CD14-positive monocyte (primary cell): ENCODE measurements at regions of chr1 and their contacts with region 1.

Region 1: DNA sequence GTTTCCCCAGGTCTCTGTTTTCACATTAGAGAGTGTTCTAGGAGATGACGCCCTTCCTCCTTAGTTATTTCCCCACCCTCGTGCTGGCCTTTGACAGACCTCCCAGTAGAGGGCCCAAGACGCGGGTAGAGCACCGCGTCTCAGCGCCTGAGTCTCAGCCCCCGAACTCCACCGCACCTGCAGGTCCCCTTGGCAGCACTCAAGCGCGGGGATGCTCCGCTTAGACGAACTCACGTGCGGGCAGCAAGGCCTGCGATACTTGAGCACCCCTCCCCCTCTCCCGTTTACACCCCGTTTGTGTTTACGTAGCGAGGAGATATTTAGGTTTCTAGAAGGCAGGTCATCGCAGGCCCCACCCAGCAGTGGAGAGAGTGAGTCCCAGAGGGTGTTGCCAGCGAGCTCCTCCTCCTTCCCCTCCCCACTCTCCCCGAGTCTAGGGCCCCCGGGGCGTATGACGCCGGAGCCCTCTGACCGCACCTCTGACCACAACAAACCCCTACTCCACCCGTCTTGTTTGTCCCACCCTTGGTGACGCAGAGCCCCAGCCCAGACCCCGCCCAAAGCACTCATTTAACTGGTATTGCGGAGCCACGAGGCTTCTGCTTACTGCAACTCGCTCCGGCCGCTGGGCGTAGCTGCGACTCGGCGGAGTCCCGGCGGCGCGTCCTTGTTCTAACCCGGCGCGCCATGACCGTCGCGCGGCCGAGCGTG is at the start of gene CD55:
- DNase-seq: peak; percentile 99 to 100 (median 100)
- H3K4me3 ChIP-seq: peak within 1 kb of the TSS; percentile 78 to 95 (median 95)
- H3K4me3 Mint-ChIP-seq: peak within 1 kb of the TSS; percentile 96 to 97
- H3K27ac ChIP-seq: peak within 1 kb of the TSS; percentile 99
- H3K27ac Mint-ChIP-seq: peak within 1 kb of the TSS; percentile 100
- H3K4me1 ChIP-seq: peaks cover 57 to 73% of the 10 kb centered on the region in 2 donors
- H3K4me1 Mint-ChIP-seq: peaks cover 63% of the 10 kb centered on the region
- H3K27me3 ChIP-seq: no peaks in the 10 kb centered on the region
- H3K27me3 Mint-ChIP-seq: peaks cover 0 to 2% (median 1%) of the 10 kb centered on the region in 3 donors
- CTCF ChIP-seq: peak; percentile 70
- polyA plus RNA-seq, gene CD55: 171 to 221 (median 182) TPM

Region 2: GRCh38 chr1:207084701-207085180 is 236.5 kb before region 1 on chr1:
- intact Hi-C with region 1: loop called (anchors 10 kb)
- DNase-seq: peak; percentile 44 to 65 (median 60)
- H3K4me3 ChIP-seq: no peak overlapping the region
- H3K4me3 Mint-ChIP-seq: no peak overlapping the region
- H3K27ac ChIP-seq: no peak overlapping the region
- H3K27ac Mint-ChIP-seq: peak overlapping the region in 2 of 7 donors; percentile 8 to 19
- H3K4me1 ChIP-seq: peaks cover 0 to 10% of the 10 kb centered on the region in 2 donors
- H3K4me1 Mint-ChIP-seq: peaks cover 16% of the 10 kb centered on the region
- H3K27me3 ChIP-seq: peaks cover 0 to 2% of the 10 kb centered on the region in 2 donors
- H3K27me3 Mint-ChIP-seq: peaks cover 3 to 6% (median 3%) of the 10 kb centered on the region in 3 donors
- CTCF ChIP-seq: peak; percentile 71

Region 3: GRCh38 chr1:207205614-207206061 is 115.6 kb before region 1 on chr1:
- intact Hi-C with region 1: loop called in 1 of 2 experiments (anchors 5 kb)
- DNase-seq: peak; percentile 24 to 46 (median 42)
- H3K4me3 ChIP-seq: peak overlapping the region in 1 of 3 experiments; percentile 57
- H3K4me3 Mint-ChIP-seq: peak overlapping the region in 1 of 2 donors; percentile 53
- H3K27ac ChIP-seq: peak overlapping the region; percentile 46 to 88
- H3K27ac Mint-ChIP-seq: peak overlapping the region; percentile 91 to 98 (median 96)
- H3K4me1 ChIP-seq: peaks cover 8 to 26% of the 10 kb centered on the region in 2 donors
- H3K4me1 Mint-ChIP-seq: peaks cover 26% of the 10 kb centered on the region
- H3K27me3 ChIP-seq: no peaks in the 10 kb centered on the region
- H3K27me3 Mint-ChIP-seq: peaks cover 0 to 5% (median 4%) of the 10 kb centered on the region in 3 donors
- CTCF ChIP-seq: no peak

Region 4: GRCh38 chr1:207248544-207249198 is 72.6 kb before region 1 on chr1:
- intact Hi-C with region 1: loop called in 1 of 2 experiments (anchors 5 kb)
- DNase-seq: peak; percentile 81 to 96 (median 93)
- H3K4me3 ChIP-seq: peak overlapping the region in 1 of 3 experiments; percentile 51
- H3K4me3 Mint-ChIP-seq: peak overlapping the region; percentile 43 to 88
- H3K27ac ChIP-seq: peak overlapping the region; percentile 76 to 81
- H3K27ac Mint-ChIP-seq: peak overlapping the region; percentile 89 to 97 (median 93)
- H3K4me1 ChIP-seq: peaks cover 42 to 58% of the 10 kb centered on the region in 2 donors
- H3K4me1 Mint-ChIP-seq: peaks cover 53% of the 10 kb centered on the region
- H3K27me3 ChIP-seq: peaks cover 0 to 2% of the 10 kb centered on the region in 2 donors
- H3K27me3 Mint-ChIP-seq: peaks cover 2 to 8% (median 4%) of the 10 kb centered on the region in 3 donors
- CTCF ChIP-seq: no peak

Region 5: GRCh38 chr1:207336559-207337467 is 15.6 kb after region 1 on chr1:
- intact Hi-C with region 1: loop called (anchors 2 kb)
- DNase-seq: peak; percentile 79 to 98 (median 85)
- H3K4me3 ChIP-seq: peak overlapping the region in 1 of 3 experiments; percentile 50
- H3K4me3 Mint-ChIP-seq: peak overlapping the region; percentile 53 to 65
- H3K27ac ChIP-seq: peak overlapping the region in 1 of 2 donors; percentile 95
- H3K27ac Mint-ChIP-seq: peak overlapping the region; percentile 92 to 98 (median 96)
- H3K4me1 ChIP-seq: peaks cover 38 to 50% of the 10 kb centered on the region in 2 donors
- H3K4me1 Mint-ChIP-seq: peaks cover 58% of the 10 kb centered on the region
- H3K27me3 ChIP-seq: no peaks in the 10 kb centered on the region
- H3K27me3 Mint-ChIP-seq: no peaks in the 10 kb centered on the region
- CTCF ChIP-seq: no peak

Region 6: DNA sequence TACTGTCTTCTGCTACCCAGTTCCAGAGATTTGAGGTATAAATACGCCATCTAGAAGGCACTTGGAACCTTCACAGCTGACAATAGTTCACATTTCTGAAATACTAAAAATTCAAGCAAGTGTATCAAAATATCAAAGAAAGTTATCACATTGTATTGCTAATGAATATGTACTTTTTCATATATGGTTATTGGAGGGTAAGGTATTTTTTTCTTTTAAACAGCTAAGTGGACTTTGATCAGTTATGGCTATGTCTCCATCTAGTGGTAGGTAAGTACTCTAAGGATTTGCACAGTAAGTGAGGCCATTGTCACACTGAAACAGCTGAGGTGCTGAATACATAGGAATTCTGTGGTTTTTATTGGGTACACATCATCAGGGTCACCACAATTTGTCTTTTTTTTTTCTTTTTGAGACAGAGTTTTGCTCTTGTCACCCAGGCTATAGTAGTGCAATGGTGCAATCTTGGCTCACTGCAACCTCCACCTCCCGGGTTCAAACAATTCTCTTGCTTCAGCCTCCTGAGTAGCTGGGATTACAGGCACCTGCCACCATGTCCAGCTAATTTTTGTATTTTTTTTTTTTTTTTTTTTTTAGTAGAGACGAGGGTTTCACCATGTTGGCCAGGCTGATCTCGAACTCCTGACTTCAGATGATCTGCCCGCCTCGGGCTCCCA is 83.8 kb after region 1 on chr1:
- intact Hi-C with region 1: loop called in 1 of 2 experiments (anchors 5 kb)
- DNase-seq: peak; percentile 29 to 70 (median 59)
- H3K4me3 ChIP-seq: no peak overlapping the region
- H3K4me3 Mint-ChIP-seq: no peak overlapping the region
- H3K27ac ChIP-seq: no peak overlapping the region
- H3K27ac Mint-ChIP-seq: no peak overlapping the region
- H3K4me1 ChIP-seq: peaks cover 26% of the 10 kb centered on the region in 2 donors
- H3K4me1 Mint-ChIP-seq: peaks cover 28% of the 10 kb centered on the region
- H3K27me3 ChIP-seq: no peaks in the 10 kb centered on the region
- H3K27me3 Mint-ChIP-seq: no peaks in the 10 kb centered on the region
- CTCF ChIP-seq: peak; percentile 85

Region 7: GRCh38 chr1:207499573-207499972 is 178.3 kb after region 1 on chr1:
- intact Hi-C with region 1: loop called in 1 of 2 experiments (anchors 5 kb)
- DNase-seq: peak; percentile 56 to 76 (median 75)
- H3K4me3 ChIP-seq: no peak overlapping the region
- H3K4me3 Mint-ChIP-seq: no peak overlapping the region
- H3K27ac ChIP-seq: no peak overlapping the region
- H3K27ac Mint-ChIP-seq: peak overlapping the region in 2 of 7 donors; percentile 25 to 66
- H3K4me1 ChIP-seq: peaks cover 36 to 41% of the 10 kb centered on the region in 2 donors
- H3K4me1 Mint-ChIP-seq: peaks cover 36% of the 10 kb centered on the region
- H3K27me3 ChIP-seq: no peaks in the 10 kb centered on the region
- H3K27me3 Mint-ChIP-seq: peaks cover 2 to 5% (median 4%) of the 10 kb centered on the region in 3 donors
- CTCF ChIP-seq: peak; percentile 90